ENCODE measurements at regions of chr1 and their contacts with region 1.

Region 1: DNA sequence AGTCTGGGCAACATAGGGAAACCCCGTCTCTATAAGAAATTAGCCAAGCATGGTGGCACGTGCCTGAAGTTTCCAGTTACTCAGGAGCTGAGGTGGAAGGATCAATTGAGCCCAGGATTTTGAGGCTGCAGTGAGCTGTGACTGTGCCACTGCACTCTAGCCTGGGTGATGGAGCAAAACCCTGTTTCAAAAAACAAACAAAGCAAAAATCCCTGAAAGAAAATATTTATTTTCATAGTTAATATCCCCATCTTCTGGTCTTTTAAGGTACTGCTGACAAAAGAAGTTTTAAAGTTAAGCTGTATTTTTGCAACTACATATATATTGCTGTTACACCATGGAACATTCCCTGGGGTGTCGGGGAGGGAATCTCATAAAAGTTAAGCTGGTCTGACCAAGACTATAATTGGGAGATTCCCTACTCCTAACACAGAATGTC is 26.0 kb downstream of the VAMP4 start:
- DNase-seq: no peak
- ATAC-seq: peak; percentile 65 to 74 (median 72)
- H3K4me3 ChIP-seq: no peak overlapping the region
- H3K27ac ChIP-seq: no peak overlapping the region
- H3K4me1 ChIP-seq: no peaks in the 10 kb centered on the region
- H3K27me3 ChIP-seq: no peaks in the 10 kb centered on the region
- CTCF ChIP-seq: peak; percentile 41 to 50 (median 46)
- POLR2A ChIP-seq: no peak

Region 2: DNA sequence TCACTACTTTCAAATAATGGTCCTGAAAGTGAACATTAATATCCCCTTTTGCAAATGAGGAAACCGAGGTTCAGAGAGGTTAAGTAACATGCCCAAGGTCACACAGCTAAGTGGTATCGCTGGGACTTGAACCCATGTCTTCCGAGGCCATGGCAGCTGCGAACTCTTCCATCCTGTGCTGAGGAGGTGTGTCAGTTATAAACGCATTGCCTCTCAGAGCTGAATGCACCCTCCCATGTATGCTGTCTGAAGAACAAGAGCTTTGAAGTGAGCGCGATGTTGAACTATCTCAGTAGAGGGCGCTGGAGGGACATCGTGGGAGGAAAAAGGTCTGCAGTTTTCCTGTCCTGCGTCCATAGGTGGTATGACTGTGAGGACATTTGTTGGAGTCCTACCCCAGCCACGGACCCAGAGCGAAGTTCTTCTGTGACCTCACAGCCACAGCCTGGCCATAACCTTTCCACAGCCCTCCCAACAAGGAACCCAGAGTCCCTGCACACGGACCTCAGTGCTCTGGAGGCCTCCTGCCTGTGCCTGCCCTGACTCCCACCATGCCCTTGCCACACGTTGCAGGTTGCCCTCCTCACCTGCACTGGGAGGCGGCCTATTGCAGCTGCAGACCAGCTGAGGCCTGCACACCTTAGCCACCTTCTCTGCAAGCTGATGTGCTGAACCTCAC is 70.9 kb before region 1 on chr1:
- intact Hi-C with region 1: loop called in 1 of 2 experiments (anchors 10 kb)
- DNase-seq: peak; percentile 66 to 87 (median 67)
- ATAC-seq: peak; percentile 96 to 99 (median 98)
- H3K4me3 ChIP-seq: no peak overlapping the region
- H3K27ac ChIP-seq: peak overlapping the region in 1 of 3 donors; percentile 41
- H3K4me1 ChIP-seq: peaks cover 0 to 13% (median 2%) of the 10 kb centered on the region in 4 donors
- H3K27me3 ChIP-seq: no peaks in the 10 kb centered on the region
- CTCF ChIP-seq: peak; percentile 72 to 81 (median 80)
- POLR2A ChIP-seq: no peak

Region 3: GRCh38 chr1:171683870-171684269 is 32.0 kb before region 1 on chr1:
- intact Hi-C with region 1: no loop called
- DNase-seq: no peak
- ATAC-seq: no peak
- H3K4me3 ChIP-seq: no peak overlapping the region
- H3K27ac ChIP-seq: no peak overlapping the region
- H3K4me1 ChIP-seq: no peaks in the 10 kb centered on the region
- H3K27me3 ChIP-seq: no peaks in the 10 kb centered on the region
- CTCF ChIP-seq: no peak
- POLR2A ChIP-seq: no peak